Calu3 (cell line): ENCODE measurements at regions of chr9 and their contacts with region 1.

Region 1: GRCh38 chr9:90102292-90102901 is 497.6 kb downstream of the GADD45G start:
- DNase-seq: peak; percentile 76
- H3K4me3 Mint-ChIP-seq: no peak overlapping the region
- H3K27ac Mint-ChIP-seq: no peak overlapping the region
- H3K4me1 Mint-ChIP-seq: peaks cover under 1% of the 10 kb centered on the region
- H3K27me3 Mint-ChIP-seq: no peaks in the 10 kb centered on the region
- CTCF ChIP-seq: peak; percentile 46

Region 2: DNA sequence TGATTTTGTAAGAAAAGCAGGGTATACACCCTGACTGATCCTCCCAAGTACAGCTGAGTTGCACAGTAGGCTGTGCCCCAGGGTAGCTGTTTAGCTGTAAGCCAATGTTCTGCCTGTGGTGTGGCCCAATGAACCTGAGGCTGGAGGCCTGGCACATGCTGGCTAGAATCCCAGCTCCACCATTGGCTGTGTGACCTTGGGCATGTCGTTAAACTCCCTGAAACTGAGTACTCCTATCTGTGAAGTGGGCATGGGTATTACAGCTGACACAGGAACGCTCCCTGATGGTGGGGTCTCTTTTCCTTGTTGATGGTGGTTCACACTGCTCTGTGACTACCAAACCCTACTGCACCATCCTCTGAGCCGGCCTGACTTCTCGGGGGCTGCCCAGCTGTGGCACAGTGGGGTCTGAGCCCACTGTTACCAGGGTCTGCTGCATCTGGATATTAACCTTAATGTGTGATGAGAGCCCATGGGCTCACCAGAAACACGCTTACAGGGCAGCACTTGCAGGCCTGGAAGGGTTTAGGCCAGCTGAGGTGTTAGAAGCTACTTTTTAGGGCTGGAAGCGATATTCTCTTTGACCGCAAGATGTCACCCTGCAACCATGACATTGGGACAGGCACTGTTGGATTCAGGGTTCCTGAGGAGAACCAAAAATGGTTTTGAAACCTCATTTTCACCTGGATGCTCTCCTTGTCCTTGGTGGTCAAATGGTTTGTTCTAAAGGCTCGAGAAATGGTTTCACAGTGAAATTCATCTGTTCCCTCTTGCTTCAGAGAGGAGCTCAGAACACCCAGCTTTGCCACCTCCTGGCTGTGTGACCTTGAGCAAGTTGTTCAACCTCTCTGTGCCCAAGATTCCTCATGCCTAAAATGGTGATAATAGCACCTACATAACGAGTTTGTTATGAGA is 504.4 kb before region 1 on chr9:
- CTCF ChIA-PET with region 1: interaction called, 30 read pairs
- intact Hi-C with region 1: loop called (anchors 1 kb)
- DNase-seq: peak; percentile 57
- H3K4me3 Mint-ChIP-seq: no peak overlapping the region
- H3K27ac Mint-ChIP-seq: no peak overlapping the region
- H3K4me1 Mint-ChIP-seq: no peaks in the 10 kb centered on the region
- H3K27me3 Mint-ChIP-seq: peaks cover 34% of the 10 kb centered on the region
- CTCF ChIP-seq: peak; percentile 37

Region 3: GRCh38 chr9:90180381-90180780 is 78.0 kb after region 1 on chr9:
- CTCF ChIA-PET with region 1: no interaction called
- intact Hi-C with region 1: no loop called
- DNase-seq: no peak
- H3K4me3 Mint-ChIP-seq: no peak overlapping the region
- H3K27ac Mint-ChIP-seq: no peak overlapping the region
- H3K4me1 Mint-ChIP-seq: no peaks in the 10 kb centered on the region
- H3K27me3 Mint-ChIP-seq: no peaks in the 10 kb centered on the region
- CTCF ChIP-seq: no peak

Region 4: GRCh38 chr9:90296539-90296938 is 194.1 kb after region 1 on chr9:
- CTCF ChIA-PET with region 1: no interaction called
- intact Hi-C with region 1: no loop called
- DNase-seq: no peak
- H3K4me3 Mint-ChIP-seq: no peak overlapping the region
- H3K27ac Mint-ChIP-seq: no peak overlapping the region
- H3K4me1 Mint-ChIP-seq: no peaks in the 10 kb centered on the region
- H3K27me3 Mint-ChIP-seq: no peaks in the 10 kb centered on the region
- CTCF ChIP-seq: no peak

Region 5: DNA sequence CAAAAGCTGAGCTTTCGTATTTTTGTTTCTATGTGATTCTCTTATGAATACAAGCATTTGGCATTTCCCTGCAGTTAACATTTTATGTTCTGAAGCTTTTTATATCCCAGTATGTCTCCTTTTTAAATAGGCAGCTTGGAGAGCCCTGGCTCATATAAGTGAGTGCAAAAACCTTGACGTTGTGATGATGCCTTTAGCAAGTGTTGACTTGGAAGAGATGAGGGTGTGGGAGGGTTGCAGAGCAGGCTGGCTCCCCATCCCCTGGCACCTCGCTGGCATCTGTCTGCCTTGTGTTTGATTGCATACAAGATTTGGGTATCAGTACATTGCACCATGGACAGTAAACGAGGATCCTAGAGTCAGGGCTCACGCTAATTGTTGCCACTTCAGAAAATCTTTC is 582.3 kb after region 1 on chr9:
- CTCF ChIA-PET with region 1: no interaction called
- intact Hi-C with region 1: no loop called
- DNase-seq: no peak
- H3K4me3 Mint-ChIP-seq: no peak overlapping the region
- H3K27ac Mint-ChIP-seq: no peak overlapping the region
- H3K4me1 Mint-ChIP-seq: no peaks in the 10 kb centered on the region
- H3K27me3 Mint-ChIP-seq: peaks cover 8% of the 10 kb centered on the region
- CTCF ChIP-seq: no peak